Vagina (tissue), 2 donors: ENCODE measurements at regions of chr2 and their contacts with region 1.

Region 1: DNA sequence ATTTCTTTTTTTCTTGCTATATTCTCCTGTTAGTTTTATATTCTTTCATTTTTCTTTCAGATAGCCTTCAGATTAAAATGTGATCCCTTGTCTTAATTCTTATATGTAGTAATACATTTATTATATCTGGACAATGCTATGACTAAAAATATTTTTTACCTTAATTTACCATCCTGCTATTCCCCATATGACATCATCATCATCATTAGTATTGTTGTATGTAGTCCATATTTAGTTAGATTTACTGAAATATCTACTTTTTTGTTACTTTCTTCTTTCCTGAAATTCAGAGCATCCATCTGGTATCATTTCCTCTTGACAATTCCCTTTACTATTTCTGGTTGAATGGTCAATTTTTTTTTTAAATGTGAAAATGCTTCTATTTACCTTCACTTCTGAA is 951.6 kb upstream of the POU3F3 start:
- DNase-seq: no peak
- H3K4me3 ChIP-seq: no peak overlapping the region
- H3K27ac ChIP-seq: no peak overlapping the region
- H3K4me1 ChIP-seq: no peaks in the 10 kb centered on the region
- H3K27me3 ChIP-seq: no peaks in the 10 kb centered on the region
- CTCF ChIP-seq: no peak
- POLR2A ChIP-seq: no peak

Region 2: GRCh38 chr2:104378853-104379374 is 476.6 kb after region 1 on chr2:
- intact Hi-C with region 1: no loop called
- DNase-seq: no peak
- H3K4me3 ChIP-seq: no peak overlapping the region
- H3K27ac ChIP-seq: no peak overlapping the region
- H3K4me1 ChIP-seq: no peaks in the 10 kb centered on the region
- H3K27me3 ChIP-seq: no peaks in the 10 kb centered on the region
- CTCF ChIP-seq: no peak
- POLR2A ChIP-seq: no peak

Region 3: GRCh38 chr2:105143467-105144151 is 1241.3 kb after region 1 on chr2:
- intact Hi-C with region 1: loop called (anchors 5 kb)
- DNase-seq: no peak
- H3K4me3 ChIP-seq: peak overlapping the region; percentile 47 to 52
- H3K27ac ChIP-seq: no peak overlapping the region
- H3K4me1 ChIP-seq: peaks cover 17% of the 10 kb centered on the region
- H3K27me3 ChIP-seq: no peaks in the 10 kb centered on the region
- CTCF ChIP-seq: no peak
- POLR2A ChIP-seq: no peak